ENCODE measurements at regions of chr11 and their contacts with region 1.

Region 1: DNA sequence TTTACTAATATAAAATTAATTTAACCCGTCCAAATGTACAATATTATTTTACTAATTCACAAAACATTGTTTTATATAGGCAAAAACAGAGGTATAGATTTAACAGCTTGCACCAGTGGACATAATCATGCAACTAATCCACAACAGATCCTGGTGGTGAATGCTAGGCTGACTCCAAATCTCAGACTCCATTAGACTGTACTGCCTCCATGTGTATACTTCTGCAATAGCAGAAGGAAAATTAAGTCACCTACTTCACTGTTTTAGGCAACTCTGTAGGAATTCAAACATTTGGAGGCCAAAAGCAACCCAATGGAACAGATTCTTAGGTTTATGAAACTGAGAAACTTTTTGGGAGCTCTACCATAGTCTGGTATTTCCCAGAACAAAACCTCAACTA is 30.0 kb upstream of the RAB39A start:
- DNase-seq: peak; percentile 81
- ATAC-seq: peak; percentile 99
- H3K4me3 ChIP-seq: no peak overlapping the region
- H3K27ac ChIP-seq: no peak overlapping the region
- H3K4me1 ChIP-seq: no peaks in the 10 kb centered on the region
- H3K27me3 ChIP-seq: peaks cover 22% of the 10 kb centered on the region
- CTCF ChIP-seq: peak; percentile 94

Region 2: DNA sequence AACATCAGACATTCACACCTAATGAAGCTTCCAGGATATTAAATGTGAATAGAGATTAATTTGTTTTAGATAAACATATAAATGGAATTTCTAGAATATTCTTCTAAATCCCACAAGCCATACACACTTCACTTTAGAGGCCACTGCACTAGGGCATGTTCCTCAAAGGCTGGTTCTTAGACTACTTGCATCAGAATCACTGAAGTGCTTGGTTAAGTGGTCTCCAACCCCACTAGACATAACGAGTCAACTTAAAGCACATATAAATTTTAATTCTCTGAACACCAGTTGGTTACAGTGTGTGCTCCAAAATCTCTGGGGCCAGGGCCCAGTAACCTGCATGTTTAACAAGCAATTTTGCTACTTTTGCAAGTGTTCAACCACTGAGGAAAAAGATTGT is 324.8 kb before region 1 on chr11:
- CTCF ChIA-PET with region 1: no interaction called
- POLR2A ChIA-PET with region 1: no interaction called
- intact Hi-C with region 1: loop called (anchors 2 kb)
- DNase-seq: no peak
- ATAC-seq: no peak
- H3K4me3 ChIP-seq: no peak overlapping the region
- H3K27ac ChIP-seq: no peak overlapping the region
- H3K4me1 ChIP-seq: no peaks in the 10 kb centered on the region
- H3K27me3 ChIP-seq: peaks cover 5% of the 10 kb centered on the region; the same call in 1 of the 2 replicates
- CTCF ChIP-seq: no peak

Region 3: DNA sequence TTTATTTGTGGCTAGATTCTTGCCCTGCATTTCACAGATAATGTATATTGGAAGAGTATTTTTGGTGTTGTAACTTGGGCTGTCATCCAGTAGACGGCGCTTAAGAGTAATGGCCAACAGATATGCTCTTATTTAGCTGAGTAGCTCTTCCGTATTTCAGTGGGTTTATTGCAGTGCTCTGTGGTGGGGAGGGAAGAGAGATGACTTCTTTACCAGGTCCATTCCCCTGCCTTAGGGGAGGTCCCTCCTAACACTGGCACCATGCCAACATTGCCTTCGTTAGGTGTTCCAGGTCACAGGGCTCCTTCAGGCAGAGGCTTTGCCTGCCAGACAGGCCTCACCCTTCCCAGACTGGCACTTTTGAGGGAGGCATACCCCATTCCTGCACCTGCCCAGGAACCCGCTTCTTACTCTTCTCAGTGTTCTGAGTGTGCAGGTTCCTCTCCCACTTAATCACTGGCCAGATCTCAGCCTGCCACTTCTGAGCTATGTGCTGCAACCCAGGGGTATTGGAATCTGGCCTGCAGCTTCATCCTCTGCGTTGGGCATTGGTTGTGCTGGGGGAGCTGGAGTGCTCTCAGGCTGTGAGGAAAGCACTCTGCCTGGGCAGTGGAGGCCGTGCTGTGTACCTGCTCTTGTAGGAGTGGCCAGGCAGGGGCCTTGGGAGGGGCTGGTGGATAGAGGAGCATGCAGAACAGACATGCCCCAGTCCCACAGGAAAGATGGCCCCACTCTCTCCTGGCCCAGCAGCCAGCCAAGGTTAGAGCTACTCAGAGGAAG is 157.0 kb before region 1 on chr11:
- CTCF ChIA-PET with region 1: interaction called, 5 read pairs
- POLR2A ChIA-PET with region 1: no interaction called
- intact Hi-C with region 1: loop called (anchors 2 kb)
- DNase-seq: peak; percentile 73
- ATAC-seq: peak; percentile 86
- H3K4me3 ChIP-seq: no peak overlapping the region
- H3K27ac ChIP-seq: no peak overlapping the region
- H3K4me1 ChIP-seq: no peaks in the 10 kb centered on the region
- H3K27me3 ChIP-seq: peaks cover 45% of the 10 kb centered on the region
- CTCF ChIP-seq: peak; percentile 98

Region 4: DNA sequence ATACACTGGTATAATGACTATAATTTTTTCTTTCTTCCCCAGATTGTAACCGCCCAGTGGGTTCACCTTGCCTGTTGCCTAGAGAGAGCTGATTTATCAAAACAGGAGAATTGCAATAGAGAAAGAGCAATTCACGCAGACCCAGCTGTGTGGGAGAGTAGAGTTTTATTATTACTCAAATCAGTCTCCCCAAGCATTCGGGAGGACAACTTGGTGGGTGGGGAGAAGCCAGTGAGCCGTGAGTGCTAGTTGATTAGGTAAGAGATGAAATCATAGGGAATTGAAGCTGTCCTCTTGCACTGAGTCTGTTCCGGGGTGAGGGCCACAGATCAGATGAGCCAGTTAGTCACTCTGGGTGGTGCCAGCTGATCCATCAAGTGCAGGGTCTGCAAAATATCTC is 112.9 kb before region 1 on chr11:
- CTCF ChIA-PET with region 1: no interaction called
- POLR2A ChIA-PET with region 1: no interaction called
- intact Hi-C with region 1: loop called (anchors 10 kb)
- DNase-seq: no peak
- ATAC-seq: no peak
- H3K4me3 ChIP-seq: no peak overlapping the region
- H3K27ac ChIP-seq: no peak overlapping the region
- H3K4me1 ChIP-seq: peaks cover 10% of the 10 kb centered on the region
- H3K27me3 ChIP-seq: no peaks in the 10 kb centered on the region
- CTCF ChIP-seq: no peak

Region 5: GRCh38 chr11:107799218-107799859 is 98.9 kb before region 1 on chr11:
- CTCF ChIA-PET with region 1: no interaction called
- POLR2A ChIA-PET with region 1: no interaction called
- intact Hi-C with region 1: loop called (anchors 1 kb)
- DNase-seq: peak; percentile 94
- ATAC-seq: peak; percentile 80
- H3K4me3 ChIP-seq: no peak overlapping the region
- H3K27ac ChIP-seq: no peak overlapping the region
- H3K4me1 ChIP-seq: no peaks in the 10 kb centered on the region
- H3K27me3 ChIP-seq: no peaks in the 10 kb centered on the region
- CTCF ChIP-seq: peak; percentile 98

Region 6: GRCh38 chr11:107858217-107859070 is 39.8 kb before region 1 on chr11 and contains the start of gene SLC35F2:
- CTCF ChIA-PET with region 1: interaction called, 8 read pairs
- POLR2A ChIA-PET with region 1: no interaction called
- intact Hi-C with region 1: loop called (anchors 1 kb)
- DNase-seq: peak; percentile 96
- ATAC-seq: peak; percentile 70
- H3K4me3 ChIP-seq: peak within 1 kb of the TSS; percentile 81
- H3K27ac ChIP-seq: peak within 1 kb of the TSS; percentile 60
- H3K4me1 ChIP-seq: peaks cover 20% of the 10 kb centered on the region
- H3K27me3 ChIP-seq: no peaks in the 10 kb centered on the region
- CTCF ChIP-seq: peak; percentile 7; the same call in 1 of the 2 replicates
- total RNA-seq, gene SLC35F2: 190 and 210 TPM in 2 replicates

Region 7: DNA sequence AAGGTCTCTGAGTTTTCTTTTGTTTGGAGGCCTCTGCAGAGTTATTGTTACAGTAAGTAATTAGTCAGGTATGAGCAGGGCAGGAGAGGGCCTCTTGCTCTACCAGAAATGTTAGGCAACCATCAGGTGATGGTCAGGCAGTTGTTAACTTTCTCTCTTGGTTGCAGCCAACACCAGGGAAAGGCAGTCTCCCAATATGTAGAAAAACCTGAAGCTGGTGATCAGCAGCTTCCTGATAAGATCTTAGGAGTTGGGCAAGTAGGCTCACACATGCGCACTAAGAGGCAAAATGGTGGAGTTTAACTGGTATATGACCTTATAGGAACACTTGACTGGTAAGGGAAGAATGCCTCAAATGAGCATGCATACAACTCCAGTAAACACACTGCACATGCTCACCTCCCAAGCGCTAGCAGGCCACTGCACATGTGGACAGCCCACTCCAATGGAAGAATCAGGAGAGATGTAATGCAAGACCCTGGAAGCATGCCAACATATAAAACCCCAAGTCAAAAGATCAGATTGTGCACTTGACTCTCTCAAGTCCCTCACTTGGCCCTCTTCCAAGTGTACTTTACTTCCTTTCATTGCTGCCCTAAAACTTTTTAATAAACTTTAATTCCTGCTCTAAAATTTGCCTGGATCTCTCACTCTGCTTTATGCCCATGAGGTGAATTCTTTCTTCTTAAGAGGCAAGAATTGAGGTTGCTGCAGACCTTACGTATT is 16.0 kb before region 1 on chr11:
- CTCF ChIA-PET with region 1: interaction called, 10 read pairs
- POLR2A ChIA-PET with region 1: no interaction called
- intact Hi-C with region 1: no loop called
- DNase-seq: peak; percentile 19
- ATAC-seq: no peak
- H3K4me3 ChIP-seq: no peak overlapping the region
- H3K27ac ChIP-seq: no peak overlapping the region
- H3K4me1 ChIP-seq: 0 out of 2 replicates have a peak, but pooled peaks cover 4% of the 10 kb centered on the region
- H3K27me3 ChIP-seq: no peaks in the 10 kb centered on the region
- CTCF ChIP-seq: no peak

Region 8: DNA sequence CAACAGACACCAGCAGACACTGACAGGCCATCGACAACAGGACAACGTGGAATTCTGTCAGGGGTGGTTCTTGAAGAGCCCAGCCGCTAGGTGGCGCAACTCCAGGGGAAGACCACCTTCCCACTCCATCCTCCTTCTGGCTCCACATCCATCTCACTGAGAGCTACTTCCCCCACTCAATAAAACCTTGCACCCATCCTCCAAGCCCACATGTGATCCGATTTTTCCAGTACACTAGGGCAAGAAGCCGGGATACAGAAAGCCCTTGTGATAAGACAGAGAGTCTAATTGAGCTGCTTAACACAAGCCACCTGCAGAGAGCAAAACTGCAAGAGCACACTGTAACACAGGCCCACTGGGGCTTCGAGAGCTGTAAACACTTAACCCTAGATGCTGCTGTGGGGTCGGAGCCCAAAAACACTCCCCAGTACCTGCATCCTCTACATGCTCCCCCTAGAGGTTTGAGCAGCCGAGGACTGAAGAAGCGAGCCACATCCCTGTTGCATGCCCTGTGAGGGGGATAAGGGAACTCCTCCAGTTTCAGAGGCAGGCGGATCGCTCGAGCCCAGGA is 18.5 kb after region 1 on chr11:
- CTCF ChIA-PET with region 1: no interaction called
- POLR2A ChIA-PET with region 1: no interaction called
- intact Hi-C with region 1: no loop called
- DNase-seq: peak; percentile 57
- ATAC-seq: peak; percentile 79
- H3K4me3 ChIP-seq: no peak overlapping the region
- H3K27ac ChIP-seq: no peak overlapping the region
- H3K4me1 ChIP-seq: no peaks in the 10 kb centered on the region
- H3K27me3 ChIP-seq: peaks cover 6% of the 10 kb centered on the region; the same call in 1 of the 2 replicates
- CTCF ChIP-seq: peak; percentile 94

Measured in PC-3 (cell line).